ENCODE measurements at regions of chr10 and their contacts with region 1.

Region 1: GRCh38 chr10:133438711-133439273 is 14.4 kb upstream of the SPRN start:
- DNase-seq: peak; percentile 17
- ATAC-seq: peak; percentile 54
- H3K4me3 ChIP-seq: no peak overlapping the region
- H3K27ac ChIP-seq: no peak overlapping the region
- H3K4me1 ChIP-seq: no peaks in the 10 kb centered on the region
- H3K27me3 ChIP-seq: no peaks in the 10 kb centered on the region
- CTCF ChIP-seq: peak; percentile 73
- EP300 ChIP-seq: no peak
- POLR2A ChIP-seq: no peak
- RAD21 ChIP-seq: no peak; the same call in 1 of the 2 replicates

Region 2: DNA sequence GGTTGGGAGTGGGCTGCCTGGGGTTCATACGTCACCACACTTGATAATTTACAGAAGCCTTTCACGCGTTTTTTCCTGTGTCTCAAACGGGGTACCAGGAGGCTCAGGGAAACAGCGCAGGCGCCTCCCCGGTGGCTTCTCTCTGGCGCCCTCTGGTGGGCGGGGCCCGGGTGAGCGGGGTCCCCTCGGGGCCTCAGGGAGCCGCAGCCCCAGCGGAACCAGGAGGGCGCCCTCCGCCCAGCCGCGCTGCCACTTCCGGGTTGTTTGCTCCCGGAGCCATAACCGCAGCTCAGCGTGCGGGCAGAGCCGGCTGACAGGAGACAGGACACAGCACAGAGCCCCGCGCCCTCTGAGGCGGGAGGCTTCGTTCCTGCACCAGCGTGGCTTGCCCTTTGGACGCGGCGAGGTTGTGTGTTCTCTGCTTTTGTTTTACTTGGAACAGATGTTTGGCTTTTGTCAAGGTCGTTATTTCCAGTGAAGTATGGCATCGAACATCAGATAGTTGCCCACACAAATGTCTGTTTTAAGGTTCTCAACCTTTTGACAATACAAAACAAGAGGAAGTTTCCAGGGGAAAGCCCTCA is 81.5 kb after region 1 on chr10:
- CTCF ChIA-PET with region 1: interaction called, 10 read pairs
- POLR2A ChIA-PET with region 1: no interaction called
- in situ Hi-C with region 1: no loop called
- intact Hi-C with region 1: loop called (anchors 2 kb)
- DNase-seq: peak; percentile 76
- ATAC-seq: peak; percentile 100
- H3K4me3 ChIP-seq: peak overlapping the region; percentile 29 to 68 (median 47); a peak in 5 of 6 replicates
- H3K27ac ChIP-seq: peak overlapping the region; percentile 14
- H3K4me1 ChIP-seq: peaks cover 38% of the 10 kb centered on the region
- H3K27me3 ChIP-seq: peaks cover 0 to 4% of the 10 kb centered on the region in 2 experiments; a peak in 2 of 5 replicates
- CTCF ChIP-seq: peak; percentile 95
- EP300 ChIP-seq: no peak
- POLR2A ChIP-seq: peak; percentile 49 to 70; a peak in 3 of 4 replicates
- RAD21 ChIP-seq: peak; percentile 82

Region 3: DNA sequence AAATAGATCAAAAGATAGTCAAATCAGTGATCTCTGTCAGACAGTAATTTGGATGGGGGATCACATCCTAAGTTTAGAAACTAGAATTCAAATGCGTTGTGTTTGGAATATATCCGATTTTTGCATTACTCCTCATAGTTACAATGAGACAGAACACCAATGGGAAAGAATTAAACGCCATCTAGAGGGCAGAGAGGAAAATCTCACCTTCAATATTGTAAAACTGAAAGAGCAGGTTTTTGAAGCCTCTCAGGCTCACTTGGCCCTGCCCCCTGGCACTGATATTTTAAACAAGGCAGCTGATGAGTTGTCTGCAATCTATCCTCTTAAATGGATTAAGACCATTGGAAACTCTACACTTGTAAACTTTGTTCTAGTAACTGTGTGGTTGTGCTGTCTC is 170.1 kb after region 1 on chr10:
- CTCF ChIA-PET with region 1: interaction called, 3 read pairs
- POLR2A ChIA-PET with region 1: no interaction called
- in situ Hi-C with region 1: no loop called
- intact Hi-C with region 1: loop called (anchors 2 kb)
- DNase-seq: no peak
- ATAC-seq: no peak
- H3K4me3 ChIP-seq: no peak overlapping the region
- H3K27ac ChIP-seq: no peak overlapping the region
- H3K4me1 ChIP-seq: no peaks in the 10 kb centered on the region
- H3K27me3 ChIP-seq: peaks cover 0 to 4% of the 10 kb centered on the region in 2 experiments; a peak in 2 of 5 replicates
- CTCF ChIP-seq: peak; percentile 48
- EP300 ChIP-seq: no peak
- POLR2A ChIP-seq: no peak
- RAD21 ChIP-seq: no peak